Mammary epithelial cell (primary cell): ENCODE measurements at regions of chr18 and their contacts with region 1.

Region 1: DNA sequence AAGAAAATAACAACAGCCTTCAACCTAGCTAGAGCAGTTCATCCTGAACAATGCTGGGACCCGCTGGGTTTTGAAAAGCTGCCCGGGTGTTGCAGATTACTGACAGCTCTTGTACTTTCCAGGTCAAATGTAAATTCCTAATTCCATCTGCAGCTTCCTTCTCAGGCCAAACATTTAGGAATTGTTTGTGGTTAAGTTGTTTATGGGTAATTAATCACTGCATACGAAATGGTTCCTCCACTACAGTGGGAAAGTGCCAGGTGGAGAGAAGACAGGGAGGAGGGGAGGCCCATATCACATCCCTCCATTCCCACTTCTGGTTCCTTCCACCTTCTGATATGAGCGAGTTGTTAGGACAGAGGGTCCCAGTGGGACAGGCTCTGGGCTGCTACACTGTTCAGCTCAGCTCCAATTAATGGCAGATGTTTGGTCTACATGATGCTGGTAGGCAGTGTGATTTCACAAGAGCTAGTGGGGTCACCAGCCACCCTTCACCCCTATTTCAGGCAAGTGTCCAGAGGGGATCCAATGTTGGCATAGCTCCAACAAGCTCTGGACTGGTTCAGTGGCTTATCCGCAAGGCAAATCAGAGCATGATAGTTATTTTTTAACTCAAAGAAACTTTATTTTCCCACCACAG is 112.9 kb upstream of the ACAA2 start:
- DNase-seq: no peak
- H3K4me3 ChIP-seq: no peak overlapping the region
- H3K27ac ChIP-seq: no peak overlapping the region
- H3K4me1 ChIP-seq: peaks cover 27% of the 10 kb centered on the region
- H3K27me3 ChIP-seq: no peaks in the 10 kb centered on the region
- CTCF ChIP-seq: no peak

Region 2: GRCh38 chr18:49892168-49892924 is 33.9 kb before region 1 on chr18:
- CTCF ChIA-PET with region 1: no interaction called
- dilution Hi-C with region 1: no loop called
- in situ Hi-C with region 1: no loop called
- intact Hi-C with region 1: loop called (anchors 2 kb)
- DNase-seq: peak; percentile 51
- H3K4me3 ChIP-seq: no peak overlapping the region
- H3K27ac ChIP-seq: no peak overlapping the region
- H3K4me1 ChIP-seq: peaks cover 19% of the 10 kb centered on the region
- H3K27me3 ChIP-seq: no peaks in the 10 kb centered on the region
- CTCF ChIP-seq: no peak

Region 3: DNA sequence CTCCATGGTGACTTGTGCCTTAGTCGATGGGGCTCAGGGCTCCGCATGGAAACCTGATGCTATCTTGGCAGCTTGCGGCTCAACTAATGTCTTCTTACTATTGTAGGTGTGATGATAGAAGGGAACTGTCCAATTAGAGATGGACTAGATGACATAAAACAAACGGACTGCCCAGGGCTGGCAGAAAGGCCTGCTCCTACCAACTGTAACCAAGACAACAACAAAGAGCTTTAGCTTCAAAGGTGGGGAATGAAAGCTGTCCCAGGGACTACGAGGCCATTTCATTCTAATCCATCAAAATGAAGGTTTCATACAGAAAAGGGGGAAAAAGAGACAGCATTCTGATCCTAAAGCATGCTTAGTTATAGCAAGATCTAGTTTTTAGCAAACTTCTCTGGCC is 74.0 kb after region 1 on chr18:
- CTCF ChIA-PET with region 1: no interaction called
- dilution Hi-C with region 1: loop called (anchors 5 kb)
- in situ Hi-C with region 1: no loop called
- intact Hi-C with region 1: no loop called
- DNase-seq: no peak
- H3K4me3 ChIP-seq: no peak overlapping the region
- H3K27ac ChIP-seq: no peak overlapping the region
- H3K4me1 ChIP-seq: peaks cover 4% of the 10 kb centered on the region
- H3K27me3 ChIP-seq: no peaks in the 10 kb centered on the region
- CTCF ChIP-seq: no peak

Region 4: DNA sequence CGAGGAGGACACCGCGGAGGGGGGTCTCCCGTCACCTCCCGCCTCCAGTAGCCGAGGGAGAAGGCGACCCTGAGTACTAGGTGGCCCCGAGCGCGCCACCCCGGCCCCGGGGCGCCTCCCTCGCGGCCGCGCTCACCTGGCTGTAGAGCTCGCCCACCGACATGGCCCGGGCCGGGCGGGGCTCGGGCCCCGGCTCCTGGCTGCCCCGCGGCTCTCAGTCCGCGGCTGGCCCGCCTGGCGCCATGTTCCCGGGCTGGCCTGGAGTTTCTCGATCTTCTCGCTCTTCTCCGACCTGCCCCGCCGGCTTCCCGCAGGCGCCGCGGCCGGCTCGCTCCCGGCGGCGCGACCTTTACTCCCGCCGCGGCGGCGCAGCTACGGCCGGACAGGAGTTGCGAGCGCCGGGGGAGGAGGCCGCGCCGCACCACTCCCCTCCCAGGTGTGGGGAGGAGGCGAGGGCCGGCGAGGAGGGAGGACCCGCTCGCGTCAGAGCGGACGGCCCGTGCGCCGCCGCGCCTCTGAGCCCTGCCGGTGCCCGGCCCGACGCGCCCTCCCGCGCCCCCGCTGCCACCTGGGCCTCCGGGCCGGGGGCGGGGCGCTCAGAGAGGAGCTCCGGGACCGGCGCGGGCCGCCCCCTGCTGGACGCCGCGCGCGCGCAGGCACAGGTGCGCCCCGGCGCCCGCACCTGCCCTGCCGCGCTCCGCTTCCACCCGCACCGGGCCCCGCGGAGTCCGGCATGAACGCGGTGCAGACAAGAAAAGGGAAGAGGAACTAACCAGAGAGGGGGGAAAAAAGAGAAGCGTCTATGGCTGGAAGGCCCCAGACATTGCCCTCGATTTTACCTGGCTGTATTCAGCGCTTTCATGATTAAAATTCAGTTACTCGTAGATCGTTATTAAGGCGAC is 268.7 kb after region 1 on chr18 and contains the start of gene MYO5B:
- CTCF ChIA-PET with region 1: no interaction called
- dilution Hi-C with region 1: no loop called
- in situ Hi-C with region 1: no loop called
- intact Hi-C with region 1: no loop called
- DNase-seq: peak; percentile 89
- H3K4me3 ChIP-seq: peak within 1 kb of the TSS; percentile 57 to 72 (median 69)
- H3K27ac ChIP-seq: peak within 1 kb of the TSS; percentile 69
- H3K4me1 ChIP-seq: peaks cover 32% of the 10 kb centered on the region
- H3K27me3 ChIP-seq: peaks cover 2% of the 10 kb centered on the region
- CTCF ChIP-seq: peak; percentile 30 to 41
- total RNA-seq, gene MYO5B: 29.8 to 31.7 TPM

Region 5: GRCh38 chr18:50350699-50351098 is 424.5 kb after region 1 on chr18:
- CTCF ChIA-PET with region 1: no interaction called
- dilution Hi-C with region 1: no loop called
- in situ Hi-C with region 1: no loop called
- intact Hi-C with region 1: no loop called
- DNase-seq: no peak
- H3K4me3 ChIP-seq: no peak overlapping the region
- H3K27ac ChIP-seq: no peak overlapping the region
- H3K4me1 ChIP-seq: peaks cover under 1% of the 10 kb centered on the region
- H3K27me3 ChIP-seq: no peaks in the 10 kb centered on the region
- CTCF ChIP-seq: no peak